ENCODE measurements at regions of chr14 and their contacts with region 1.

Region 1: DNA sequence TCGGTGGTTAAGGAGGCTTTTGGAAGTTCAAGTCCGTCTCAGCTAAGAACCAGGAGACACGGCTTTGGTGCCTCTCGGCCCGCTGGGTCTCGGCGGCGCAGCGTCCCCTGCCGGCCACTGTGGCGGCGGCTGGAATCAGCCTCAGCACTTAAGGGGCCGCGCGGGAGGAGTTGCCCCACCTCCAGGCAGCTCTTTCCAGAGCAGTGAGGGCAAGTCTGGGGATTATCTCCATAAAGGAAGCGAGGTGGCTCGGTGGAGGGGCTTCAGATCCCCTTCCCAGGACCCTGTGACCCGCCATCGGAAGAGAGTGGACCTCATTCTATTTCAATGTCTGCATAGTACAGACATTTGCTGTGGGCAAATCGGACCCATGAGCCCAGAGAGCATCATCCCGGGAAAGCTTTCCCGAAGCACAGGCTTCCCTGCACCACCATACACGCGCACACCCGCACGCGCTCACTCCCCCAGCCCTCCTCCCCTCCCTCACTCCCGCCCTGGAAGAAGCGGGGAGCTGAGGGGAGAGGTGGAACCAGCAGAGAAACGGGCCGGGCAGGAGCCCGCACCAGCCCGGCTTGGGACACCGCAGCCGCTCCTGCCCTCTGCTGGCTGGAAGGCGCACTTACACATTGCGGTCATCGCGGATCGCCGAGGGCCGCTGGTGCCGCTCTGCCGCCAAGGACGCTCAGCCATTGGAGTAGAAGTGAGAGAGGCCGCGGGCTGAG is 15.9 kb downstream of the RNASE2 start:
- DNase-seq: peak; percentile 83
- ATAC-seq: peak; percentile 91
- H3K4me3 Mint-ChIP-seq: peak overlapping the region; percentile 86
- H3K27ac Mint-ChIP-seq: peak overlapping the region; percentile 56
- H3K4me1 Mint-ChIP-seq: peaks cover 14% of the 10 kb centered on the region
- H3K27me3 Mint-ChIP-seq: peaks cover 47% of the 10 kb centered on the region

Region 2: GRCh38 chr14:20219033-20219432 is 752.1 kb before region 1 on chr14:
- CTCF ChIA-PET with region 1: no interaction called
- POLR2A ChIA-PET with region 1: no interaction called
- DNase-seq: no peak
- ATAC-seq: no peak
- H3K4me3 Mint-ChIP-seq: no peak overlapping the region
- H3K27ac Mint-ChIP-seq: no peak overlapping the region
- H3K4me1 Mint-ChIP-seq: no peaks in the 10 kb centered on the region
- H3K27me3 Mint-ChIP-seq: no peaks in the 10 kb centered on the region

Region 3: DNA sequence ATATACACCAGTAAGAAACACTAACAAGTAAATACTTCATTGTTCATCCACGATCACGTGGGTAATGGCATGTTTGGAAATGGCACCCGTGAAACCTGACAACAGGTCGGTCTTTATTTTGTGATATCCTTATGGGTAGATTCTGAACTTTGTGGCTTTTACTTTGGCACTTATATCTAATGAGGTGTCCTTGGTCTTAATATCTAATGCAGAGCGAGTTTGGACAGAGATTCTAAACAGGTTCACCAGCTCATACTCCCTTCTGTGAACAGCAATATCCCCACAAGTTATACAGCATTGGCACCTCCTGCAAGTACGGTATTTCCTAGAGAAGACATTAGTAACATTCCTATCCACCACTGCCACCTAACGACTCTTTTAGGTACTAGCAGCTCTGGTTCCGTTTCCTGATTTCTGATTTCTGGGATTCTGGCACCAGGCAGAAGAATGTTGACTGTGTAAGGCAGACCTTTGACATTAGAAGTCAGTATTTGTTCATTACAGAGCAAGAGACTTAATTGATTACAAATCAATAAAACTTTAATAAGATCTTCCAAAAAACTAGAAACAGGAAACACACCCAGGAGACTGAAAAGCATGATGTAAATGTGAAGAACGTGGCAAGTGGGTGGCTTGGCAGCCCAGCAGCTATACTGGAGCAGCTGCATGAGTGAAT is 280.2 kb before region 1 on chr14:
- CTCF ChIA-PET with region 1: interaction called, 26 read pairs
- POLR2A ChIA-PET with region 1: no interaction called
- DNase-seq: peak; percentile 61
- ATAC-seq: peak; percentile 81
- H3K4me3 Mint-ChIP-seq: no peak overlapping the region
- H3K27ac Mint-ChIP-seq: no peak overlapping the region
- H3K4me1 Mint-ChIP-seq: peaks cover 11% of the 10 kb centered on the region
- H3K27me3 Mint-ChIP-seq: no peaks in the 10 kb centered on the region

Region 4: GRCh38 chr14:20782280-20782890 is 188.8 kb before region 1 on chr14:
- CTCF ChIA-PET with region 1: interaction called, 10 read pairs
- POLR2A ChIA-PET with region 1: no interaction called
- DNase-seq: peak; percentile 36
- ATAC-seq: peak; percentile 75
- H3K4me3 Mint-ChIP-seq: peak overlapping the region; percentile 67
- H3K27ac Mint-ChIP-seq: peak overlapping the region; percentile 84
- H3K4me1 Mint-ChIP-seq: peaks cover 28% of the 10 kb centered on the region
- H3K27me3 Mint-ChIP-seq: peaks cover 6% of the 10 kb centered on the region

Region 5: GRCh38 chr14:20873370-20874177 is 97.6 kb before region 1 on chr14:
- CTCF ChIA-PET with region 1: interaction called, 10 read pairs
- POLR2A ChIA-PET with region 1: no interaction called
- DNase-seq: peak; percentile 88
- ATAC-seq: peak; percentile 94
- H3K4me3 Mint-ChIP-seq: peak overlapping the region; percentile 3
- H3K27ac Mint-ChIP-seq: no peak overlapping the region
- H3K4me1 Mint-ChIP-seq: peaks cover 22% of the 10 kb centered on the region
- H3K27me3 Mint-ChIP-seq: peaks cover 24% of the 10 kb centered on the region

Region 6: DNA sequence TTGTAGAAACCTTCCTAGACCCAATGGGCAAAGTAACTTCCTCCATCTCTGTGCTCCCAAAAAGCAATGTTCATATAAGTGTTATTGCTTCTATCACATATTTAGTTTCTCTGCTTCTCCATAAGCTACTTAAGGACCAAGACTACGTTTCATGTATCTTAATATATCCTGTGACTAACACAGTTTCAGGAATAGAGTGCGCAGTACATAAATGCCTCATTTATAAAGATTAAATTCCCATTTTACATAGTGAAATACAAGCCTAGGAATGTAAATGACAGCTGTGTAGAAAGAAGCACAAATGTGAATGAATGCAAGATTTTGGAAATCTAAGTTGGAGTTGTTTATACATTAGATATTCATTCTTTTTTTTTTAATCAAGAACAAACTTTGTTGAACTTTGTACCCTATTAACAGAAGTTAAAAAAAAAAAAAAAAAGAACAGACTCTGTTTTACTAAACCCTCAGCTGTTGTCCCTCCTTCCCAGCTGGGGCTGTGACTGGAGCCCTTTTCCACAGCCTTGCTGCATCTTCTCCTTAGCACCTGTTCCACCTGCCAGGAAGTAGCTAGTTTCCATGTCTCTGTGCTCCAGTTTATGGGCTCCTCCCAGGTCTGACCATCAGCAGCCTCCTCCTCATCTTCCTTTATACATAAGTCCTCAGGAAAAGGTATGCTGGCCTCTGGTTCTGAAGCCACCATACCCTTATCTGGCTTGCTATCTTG is 11.7 kb after region 1 on chr14:
- CTCF ChIA-PET with region 1: interaction called, 66 read pairs
- POLR2A ChIA-PET with region 1: no interaction called
- DNase-seq: no peak
- ATAC-seq: no peak
- H3K4me3 Mint-ChIP-seq: no peak overlapping the region
- H3K27ac Mint-ChIP-seq: no peak overlapping the region
- H3K4me1 Mint-ChIP-seq: peaks cover 6% of the 10 kb centered on the region
- H3K27me3 Mint-ChIP-seq: peaks cover 10% of the 10 kb centered on the region

Region 7: DNA sequence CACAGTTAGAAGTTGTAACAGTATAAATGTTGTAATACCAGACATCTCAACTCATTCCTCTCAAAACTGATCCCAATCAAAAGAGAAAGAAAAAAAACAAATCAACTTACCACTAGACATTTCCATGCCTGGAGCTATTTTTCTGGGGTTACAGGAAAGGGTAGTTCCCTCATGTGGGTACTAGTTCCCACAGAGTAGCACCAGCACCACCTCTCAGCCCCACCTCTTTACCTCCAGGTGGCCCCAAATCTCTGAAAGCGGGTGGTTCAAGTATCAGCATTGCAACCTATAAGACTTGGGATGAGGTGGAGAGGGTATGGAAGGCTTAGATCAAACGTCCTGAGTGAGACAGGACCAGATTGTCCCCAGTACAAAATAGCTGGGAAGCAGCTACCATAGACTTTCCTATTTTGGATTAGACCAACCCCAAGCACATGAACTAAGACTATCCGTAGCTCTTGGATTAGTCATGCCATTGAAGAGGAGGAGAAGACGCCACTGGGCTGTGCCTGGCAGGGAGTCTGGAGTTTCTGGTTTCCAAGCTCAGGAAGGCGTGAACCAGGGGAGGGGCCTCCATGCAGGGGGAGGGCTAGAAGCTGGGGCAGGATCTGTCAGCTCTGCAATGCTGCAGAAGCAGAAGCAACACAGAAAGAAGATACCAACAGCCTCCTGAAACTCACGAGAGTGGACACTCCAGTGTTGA is 27.7 kb after region 1 on chr14 and contains the start of gene SLC39A2:
- CTCF ChIA-PET with region 1: interaction called, 18 read pairs
- POLR2A ChIA-PET with region 1: no interaction called
- DNase-seq: no peak
- ATAC-seq: peak; percentile 20
- H3K4me3 Mint-ChIP-seq: no peak within 1 kb of the TSS
- H3K27ac Mint-ChIP-seq: peak within 1 kb of the TSS; percentile 51
- H3K4me1 Mint-ChIP-seq: peaks cover 12% of the 10 kb centered on the region
- H3K27me3 Mint-ChIP-seq: no peaks in the 10 kb centered on the region
- total RNA-seq, gene SLC39A2: not detected

Region 8: GRCh38 chr14:21039585-21040369 is 68.6 kb after region 1 on chr14:
- CTCF ChIA-PET with region 1: interaction called, 14 read pairs
- POLR2A ChIA-PET with region 1: no interaction called
- DNase-seq: peak; percentile 29
- ATAC-seq: peak; percentile 67
- H3K4me3 Mint-ChIP-seq: no peak overlapping the region
- H3K27ac Mint-ChIP-seq: no peak overlapping the region
- H3K4me1 Mint-ChIP-seq: peaks cover 6% of the 10 kb centered on the region
- H3K27me3 Mint-ChIP-seq: peaks cover 22% of the 10 kb centered on the region

Region 9: DNA sequence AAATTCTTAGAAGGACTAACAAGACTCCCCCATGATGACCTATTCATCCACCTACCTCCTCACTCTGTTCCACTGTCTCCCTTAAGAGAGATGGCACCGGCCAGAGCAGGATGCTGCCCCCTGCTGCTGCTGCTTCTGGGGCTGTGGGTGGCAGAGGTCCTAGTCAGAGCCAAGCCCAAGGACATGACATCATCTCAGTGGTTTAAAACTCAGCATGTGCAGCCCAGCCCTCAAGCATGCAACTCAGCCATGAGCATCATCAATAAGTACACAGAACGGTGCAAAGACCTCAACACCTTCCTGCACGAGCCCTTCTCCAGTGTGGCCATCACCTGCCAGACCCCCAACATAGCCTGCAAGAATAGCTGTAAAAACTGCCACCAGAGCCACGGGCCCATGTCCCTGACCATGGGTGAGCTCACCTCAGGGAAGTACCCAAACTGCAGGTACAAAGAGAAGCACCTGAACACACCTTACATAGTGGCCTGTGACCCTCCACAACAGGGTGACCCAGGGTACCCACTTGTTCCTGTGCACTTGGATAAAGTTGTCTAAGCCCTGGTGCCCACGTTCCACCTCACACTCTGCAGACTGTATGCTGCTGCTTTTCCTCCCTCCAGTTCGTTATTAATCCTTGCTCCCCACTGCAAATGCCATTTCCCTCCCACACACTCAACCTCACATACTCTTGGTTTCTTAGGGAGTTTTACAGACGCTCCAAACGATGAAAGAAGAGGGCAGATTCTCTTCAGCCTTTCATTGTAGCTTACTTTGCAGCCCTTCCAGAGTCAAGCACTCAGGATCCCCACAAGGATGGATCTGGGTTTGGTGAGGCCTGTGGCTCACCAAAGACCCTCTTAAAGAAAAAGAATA is 86.9 kb after region 1 on chr14 and contains the start of gene RNASE8:
- CTCF ChIA-PET with region 1: no interaction called
- POLR2A ChIA-PET with region 1: no interaction called
- DNase-seq: no peak
- ATAC-seq: peak; percentile 33
- H3K4me3 Mint-ChIP-seq: no peak within 1 kb of the TSS
- H3K27ac Mint-ChIP-seq: no peak within 1 kb of the TSS
- H3K4me1 Mint-ChIP-seq: no peaks in the 10 kb centered on the region
- H3K27me3 Mint-ChIP-seq: peaks cover 30% of the 10 kb centered on the region
- total RNA-seq, gene RNASE8: not detected

Region 10: GRCh38 chr14:21145437-21145836 is 174.3 kb after region 1 on chr14:
- CTCF ChIA-PET with region 1: no interaction called
- POLR2A ChIA-PET with region 1: no interaction called
- DNase-seq: no peak
- ATAC-seq: no peak
- H3K4me3 Mint-ChIP-seq: no peak overlapping the region
- H3K27ac Mint-ChIP-seq: no peak overlapping the region
- H3K4me1 Mint-ChIP-seq: no peaks in the 10 kb centered on the region
- H3K27me3 Mint-ChIP-seq: peaks cover 7% of the 10 kb centered on the region